ENCODE measurements at regions of chr2 and their contacts with region 1.

Region 1: DNA sequence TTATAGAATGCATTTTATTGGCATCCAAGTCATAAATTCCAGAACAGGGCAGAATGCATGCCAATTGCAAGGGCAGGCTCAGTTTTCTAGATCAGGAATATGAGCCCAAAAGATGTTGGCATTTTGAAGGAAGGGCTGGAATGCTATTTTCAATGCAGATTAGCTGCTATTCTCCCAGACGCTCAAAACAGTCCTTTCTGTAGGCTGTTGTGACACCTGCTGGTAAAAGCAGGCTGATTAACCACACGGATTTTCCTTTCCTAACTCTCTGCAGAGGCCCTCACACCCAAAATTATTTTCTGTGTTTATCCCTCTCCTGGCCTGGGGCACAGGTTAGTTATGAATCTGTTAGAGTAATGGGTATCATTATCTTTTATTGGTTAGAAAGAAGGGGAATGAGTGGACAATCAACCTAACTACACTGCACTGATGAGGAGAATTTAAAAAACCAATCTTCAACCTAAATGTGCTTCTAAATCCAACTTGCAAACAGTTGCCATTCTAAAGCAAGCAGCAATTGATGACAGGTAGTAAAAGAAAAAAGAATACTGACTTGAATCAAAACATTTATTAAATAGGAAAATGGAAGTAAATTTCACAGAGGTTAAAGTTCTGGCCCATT is 94.0 kb downstream of the PLA2R1 start:
- DNase-seq: no peak
- ATAC-seq: peak; percentile 60
- H3K4me3 ChIP-seq: no peak overlapping the region
- H3K27ac ChIP-seq: no peak overlapping the region
- H3K4me1 ChIP-seq: no peaks in the 10 kb centered on the region
- H3K27me3 ChIP-seq: no peaks in the 10 kb centered on the region

Region 2: GRCh38 chr2:159904127-159904958 is 64.0 kb before region 1 on chr2:
- intact Hi-C with region 1: loop called in 1 of 2 experiments (anchors 10 kb)
- DNase-seq: peak; percentile 71 to 83
- ATAC-seq: peak; percentile 86
- H3K4me3 ChIP-seq: peak within 1 kb of the TSS; percentile 27 to 54
- H3K27ac ChIP-seq: peak within 1 kb of the TSS in 1 of 2 donors; percentile 30
- H3K4me1 ChIP-seq: no peaks in the 10 kb centered on the region
- H3K27me3 ChIP-seq: no peaks in the 10 kb centered on the region

Region 3: GRCh38 chr2:160064916-160065315 is 96.5 kb after region 1 on chr2:
- intact Hi-C with region 1: no loop called
- DNase-seq: no peak
- ATAC-seq: no peak
- H3K4me3 ChIP-seq: no peak overlapping the region
- H3K27ac ChIP-seq: no peak overlapping the region
- H3K4me1 ChIP-seq: peaks cover 0 to 2% of the 10 kb centered on the region in 2 donors
- H3K27me3 ChIP-seq: no peaks in the 10 kb centered on the region